CD14-positive monocyte (primary cell): ENCODE measurements at regions of chr10 and their contacts with region 1.

Region 1: DNA sequence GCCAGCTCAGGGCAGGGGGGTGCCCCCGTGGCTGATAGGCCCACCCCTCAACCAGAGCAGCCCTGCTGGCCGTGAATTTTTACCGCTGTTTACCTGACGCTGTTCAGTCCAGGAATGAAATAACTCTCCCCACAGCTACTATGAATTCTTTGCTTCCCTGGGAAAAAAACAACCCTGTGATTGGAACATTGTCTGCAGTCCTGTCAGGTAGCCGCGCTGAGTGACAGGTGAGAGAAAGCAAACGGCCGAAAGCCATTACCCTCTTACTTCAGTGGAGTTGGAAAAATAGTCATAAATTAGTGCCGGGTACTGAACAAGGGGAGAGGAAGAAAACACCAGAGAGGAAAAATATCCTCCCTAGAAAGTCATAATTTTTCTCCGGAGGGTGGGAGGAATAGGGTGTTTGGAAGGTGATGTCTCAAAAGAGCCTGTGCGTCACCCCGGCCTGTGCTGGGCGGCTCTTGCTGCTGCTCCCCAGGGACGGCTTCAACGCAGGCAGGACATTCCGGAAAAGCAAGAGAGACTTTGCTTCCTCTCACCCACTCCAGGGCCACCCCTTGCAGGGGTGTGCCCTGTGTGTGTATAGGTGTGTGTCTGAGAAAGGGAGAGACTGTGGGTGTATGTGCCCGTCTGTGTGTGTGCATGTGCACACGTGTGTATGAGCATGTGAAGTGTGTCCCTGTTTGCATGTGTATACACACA is 69.0 kb downstream of the CDH23 start:
- DNase-seq: no peak
- H3K4me3 ChIP-seq: no peak overlapping the region
- H3K4me3 Mint-ChIP-seq: no peak overlapping the region
- H3K27ac ChIP-seq: no peak overlapping the region
- H3K27ac Mint-ChIP-seq: no peak overlapping the region
- H3K4me1 ChIP-seq: no peaks in the 10 kb centered on the region
- H3K4me1 Mint-ChIP-seq: no peaks in the 10 kb centered on the region
- H3K27me3 ChIP-seq: no peaks in the 10 kb centered on the region
- H3K27me3 Mint-ChIP-seq: no peaks in the 10 kb centered on the region
- CTCF ChIP-seq: no peak

Region 2: DNA sequence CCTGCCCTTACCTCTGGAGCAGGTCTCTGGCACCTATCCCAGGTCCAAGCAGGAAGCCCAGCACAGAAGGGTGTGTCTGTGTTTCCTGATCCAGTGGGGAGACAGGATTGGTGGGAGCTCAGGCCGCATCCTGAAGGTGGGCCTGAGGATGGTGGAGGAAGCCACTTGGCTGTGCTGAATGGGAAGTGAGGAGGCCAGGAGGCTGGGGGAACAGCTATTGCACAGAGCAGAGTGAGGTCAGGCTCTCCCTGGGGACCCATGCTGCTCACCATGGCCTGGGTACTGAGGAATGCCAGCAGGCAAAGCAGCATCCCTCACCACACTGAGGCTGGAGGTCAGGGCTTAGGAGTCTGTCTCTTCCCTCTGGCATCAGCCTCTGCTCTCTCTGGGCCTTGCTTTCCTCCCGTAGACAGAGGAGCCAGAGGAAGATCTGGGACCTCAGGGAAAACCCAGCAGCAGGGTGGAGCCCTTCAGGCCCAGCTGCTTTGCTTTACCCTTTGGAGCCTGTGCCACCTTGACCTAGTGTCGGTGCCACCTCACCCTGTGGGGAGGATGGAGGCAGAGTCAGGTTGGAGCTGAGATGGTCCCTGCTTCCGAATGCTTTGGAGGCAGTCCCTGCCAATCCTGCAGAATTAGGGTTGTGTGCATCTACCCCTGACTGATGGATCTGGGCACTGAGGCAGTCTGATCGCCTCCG is 30.0 kb before region 1 on chr10:
- intact Hi-C with region 1: loop called in 1 of 2 experiments (anchors 2 kb)
- DNase-seq: no peak
- H3K4me3 ChIP-seq: no peak overlapping the region
- H3K4me3 Mint-ChIP-seq: no peak overlapping the region
- H3K27ac ChIP-seq: no peak overlapping the region
- H3K27ac Mint-ChIP-seq: no peak overlapping the region
- H3K4me1 ChIP-seq: no peaks in the 10 kb centered on the region
- H3K4me1 Mint-ChIP-seq: peaks cover 7% of the 10 kb centered on the region
- H3K27me3 ChIP-seq: no peaks in the 10 kb centered on the region
- H3K27me3 Mint-ChIP-seq: peaks cover 1 to 9% (median 4%) of the 10 kb centered on the region in 3 donors
- CTCF ChIP-seq: no peak

Region 3: DNA sequence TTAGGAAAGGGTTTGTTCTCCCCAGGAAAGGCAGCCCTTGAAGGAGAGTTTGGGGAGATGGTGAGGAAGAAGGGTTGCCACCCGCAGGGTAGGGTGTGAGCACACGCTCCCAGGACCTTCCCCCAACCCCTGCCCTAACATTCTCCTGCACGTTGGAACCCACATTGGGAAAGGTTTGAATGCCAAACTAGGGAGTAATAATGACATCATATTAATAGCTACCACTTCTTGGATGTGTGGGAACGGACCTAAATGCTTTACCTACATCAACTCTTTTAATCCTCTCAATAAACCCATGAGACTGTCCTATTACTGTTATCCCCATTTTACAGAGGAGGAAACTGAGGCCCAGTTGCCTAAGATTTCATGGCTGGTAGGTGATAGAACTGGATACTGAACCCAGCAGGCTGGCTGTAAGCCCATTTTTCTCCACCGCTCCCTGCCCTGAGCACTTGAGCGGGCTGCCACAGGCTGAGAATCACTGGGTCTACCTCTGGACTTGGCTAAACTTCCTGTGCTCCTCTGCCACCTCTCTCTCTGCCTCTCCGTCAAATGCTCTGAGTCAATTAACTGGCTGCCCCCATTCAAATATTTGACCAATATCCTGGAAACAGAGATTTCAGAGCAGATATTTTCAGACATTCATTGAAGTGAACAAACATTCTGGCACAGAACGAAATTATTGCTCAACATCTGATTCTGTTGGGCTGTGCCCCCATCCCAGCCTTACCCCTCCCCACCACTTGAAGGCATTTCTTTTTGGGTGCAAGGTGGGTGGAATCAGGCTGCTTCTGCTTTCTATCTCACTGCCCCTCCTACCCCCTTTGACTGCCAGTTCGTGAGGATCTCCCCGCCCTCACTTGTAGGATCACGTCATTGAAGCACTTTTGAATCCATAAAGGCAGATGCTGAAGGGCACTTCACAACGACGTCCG is 124.2 kb after region 1 on chr10:
- intact Hi-C with region 1: no loop called
- DNase-seq: peak; percentile 11 to 40 (median 12)
- H3K4me3 ChIP-seq: no peak overlapping the region
- H3K4me3 Mint-ChIP-seq: peak overlapping the region in 1 of 2 donors; percentile 63
- H3K27ac ChIP-seq: no peak overlapping the region
- H3K27ac Mint-ChIP-seq: peak overlapping the region in 4 of 7 donors; percentile 17 to 51 (median 32)
- H3K4me1 ChIP-seq: peaks cover 12 to 16% of the 10 kb centered on the region in 2 donors
- H3K4me1 Mint-ChIP-seq: peaks cover 25% of the 10 kb centered on the region
- H3K27me3 ChIP-seq: no peaks in the 10 kb centered on the region
- H3K27me3 Mint-ChIP-seq: peaks cover 3 to 8% (median 4%) of the 10 kb centered on the region in 3 donors
- CTCF ChIP-seq: no peak

Region 4: DNA sequence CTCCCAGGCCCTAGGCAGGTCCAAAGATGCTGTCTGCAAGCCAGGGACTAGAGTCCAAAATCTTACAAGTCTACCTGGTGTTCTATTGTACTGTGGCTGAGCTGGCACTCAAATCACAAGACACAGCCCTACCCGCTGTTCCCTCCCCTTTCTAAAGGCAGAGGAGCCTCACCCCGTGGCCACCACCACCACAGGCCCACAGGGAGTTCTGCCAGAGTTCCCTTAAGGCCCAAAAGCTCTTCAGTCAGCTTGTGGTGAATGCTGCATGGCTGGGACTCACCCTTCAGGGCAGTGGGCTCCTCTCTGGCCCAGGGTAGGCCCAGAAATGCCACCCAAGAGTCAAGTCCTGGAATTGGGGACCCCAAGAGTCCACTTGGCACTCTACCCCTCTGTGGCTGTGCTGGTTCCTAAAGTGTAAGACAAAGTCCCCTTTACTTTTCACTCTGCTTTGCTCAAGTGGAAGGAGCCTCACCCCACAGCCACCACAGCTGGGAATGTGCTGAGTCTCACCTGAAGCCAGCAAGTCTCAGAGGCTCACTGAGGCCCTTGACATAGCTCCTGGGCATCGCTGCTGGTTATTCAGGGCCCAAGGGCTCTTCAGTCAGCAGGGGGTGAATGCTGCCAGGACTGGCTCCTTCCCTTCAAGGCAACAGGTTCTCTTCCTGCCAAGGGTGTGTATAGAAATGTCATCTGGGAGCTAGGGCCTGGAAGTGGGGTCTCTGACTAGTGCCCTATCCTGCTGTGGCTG is 434.1 kb after region 1 on chr10:
- intact Hi-C with region 1: no loop called
- DNase-seq: no peak
- H3K4me3 ChIP-seq: no peak overlapping the region
- H3K4me3 Mint-ChIP-seq: no peak overlapping the region
- H3K27ac ChIP-seq: no peak overlapping the region
- H3K27ac Mint-ChIP-seq: no peak overlapping the region
- H3K4me1 ChIP-seq: peaks cover 18 to 19% of the 10 kb centered on the region in 2 donors
- H3K4me1 Mint-ChIP-seq: peaks cover 15% of the 10 kb centered on the region
- H3K27me3 ChIP-seq: no peaks in the 10 kb centered on the region
- H3K27me3 Mint-ChIP-seq: peaks cover 0 to 6% (median 4%) of the 10 kb centered on the region in 3 donors
- CTCF ChIP-seq: no peak